ENCODE measurements at regions of chr6 and their contacts with region 1.

Region 1: DNA sequence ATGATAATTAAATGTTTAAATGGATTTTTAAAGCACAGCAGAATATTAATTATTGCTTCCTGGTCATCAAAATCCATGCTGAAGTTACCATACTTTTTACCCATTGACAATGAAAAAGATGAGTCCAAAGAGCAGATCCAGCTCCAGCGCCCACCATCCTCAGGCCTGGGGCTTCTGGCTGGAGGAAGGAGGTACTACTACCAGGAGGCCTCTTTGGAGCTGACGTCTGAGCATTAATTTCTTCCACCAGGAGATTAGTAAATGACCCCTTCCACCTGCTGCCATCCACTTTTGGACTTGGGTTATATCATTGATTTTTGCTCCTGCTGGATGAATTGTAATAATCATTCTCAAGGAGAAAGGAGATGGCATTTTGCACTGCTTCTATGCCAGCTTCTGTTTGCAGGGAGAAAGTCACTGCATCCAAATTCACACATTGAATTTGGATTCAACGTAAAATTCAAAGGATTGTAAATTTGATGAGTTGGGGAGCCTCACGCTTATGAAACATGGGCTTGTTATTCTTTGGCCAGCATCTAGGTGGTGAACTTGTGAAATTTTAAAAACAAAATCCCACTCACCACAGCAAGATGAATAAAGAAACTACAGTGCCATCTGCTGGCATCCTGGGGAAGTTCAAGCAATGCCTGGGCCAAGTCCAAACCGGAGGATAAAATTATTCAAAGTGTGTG is 121.8 kb downstream of the SASH1 start:
- DNase-seq: peak; percentile 28
- H3K4me3 Mint-ChIP-seq: no peak overlapping the region
- H3K27ac Mint-ChIP-seq: no peak overlapping the region
- H3K4me1 Mint-ChIP-seq: peaks cover 3% of the 10 kb centered on the region
- H3K27me3 Mint-ChIP-seq: peaks cover 24% of the 10 kb centered on the region

Region 2: GRCh38 chr6:147506704-147507114 is 957.8 kb before region 1 on chr6:
- intact Hi-C with region 1: loop called (anchors 5 kb)
- DNase-seq: no peak
- H3K4me3 Mint-ChIP-seq: peak overlapping the region; percentile 62
- H3K27ac Mint-ChIP-seq: no peak overlapping the region
- H3K4me1 Mint-ChIP-seq: peaks cover 12% of the 10 kb centered on the region
- H3K27me3 Mint-ChIP-seq: peaks cover 51% of the 10 kb centered on the region

Region 3: DNA sequence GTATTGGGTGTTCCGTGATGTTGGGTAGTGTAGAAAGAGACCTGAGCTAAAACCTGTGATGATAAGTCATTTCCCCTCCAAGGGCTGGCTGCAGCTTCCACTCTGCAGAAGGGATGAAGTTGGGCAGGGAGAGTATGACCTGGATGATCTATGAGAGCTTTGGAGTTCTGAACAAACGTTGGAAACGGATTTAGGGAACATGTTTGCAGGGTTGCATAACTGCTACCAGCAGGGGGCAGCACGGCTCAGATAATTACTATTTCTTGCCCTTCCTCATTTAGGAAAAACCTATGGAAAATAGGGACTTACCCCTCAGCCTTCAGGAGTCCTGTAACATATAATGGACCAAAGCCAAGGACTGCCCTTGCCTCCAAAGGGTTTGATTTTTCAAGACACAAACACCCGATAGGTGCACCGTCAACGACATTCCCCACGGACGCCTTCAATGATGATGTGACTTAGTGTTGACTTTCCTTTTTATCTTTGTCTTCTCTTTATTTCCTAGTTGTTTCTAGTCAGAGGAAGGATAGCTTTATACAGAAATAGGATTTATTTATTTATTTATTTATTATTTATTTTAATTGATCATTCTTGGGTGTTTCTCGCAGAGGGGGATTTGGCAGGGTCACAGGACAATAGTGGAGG is 286.8 kb before region 1 on chr6:
- intact Hi-C with region 1: loop called (anchors 1 kb)
- DNase-seq: no peak
- H3K4me3 Mint-ChIP-seq: no peak overlapping the region
- H3K27ac Mint-ChIP-seq: no peak overlapping the region
- H3K4me1 Mint-ChIP-seq: no peaks in the 10 kb centered on the region
- H3K27me3 Mint-ChIP-seq: peaks cover 3% of the 10 kb centered on the region